Heart right ventricle (tissue), 16 donors: ENCODE measurements at regions of chr15 and their contacts with region 1.

Region 1: GRCh38 chr15:23516866-23517265 is 48.6 kb upstream of the MKRN3 start:
- DNase-seq: no peak
- ATAC-seq: no peak
- H3K4me3 ChIP-seq: no peak overlapping the region
- H3K27ac ChIP-seq: no peak overlapping the region
- H3K4me1 ChIP-seq: no peaks in the 10 kb centered on the region
- H3K27me3 ChIP-seq: no peaks in the 10 kb centered on the region
- CTCF ChIP-seq: no peak

Region 2: GRCh38 chr15:23497710-23498111 is 19.2 kb before region 1 on chr15:
- intact Hi-C with region 1: loop called in 1 of 10 experiments (anchors 2 kb)
- DNase-seq: no peak
- ATAC-seq: no peak
- H3K4me3 ChIP-seq: no peak overlapping the region
- H3K27ac ChIP-seq: no peak overlapping the region
- H3K4me1 ChIP-seq: no peaks in the 10 kb centered on the region
- H3K27me3 ChIP-seq: peaks cover 0 to under 1% (median 0%) of the 10 kb centered on the region in 7 donors
- CTCF ChIP-seq: peak in 5 of 9 donors; percentile 26 to 44 (median 36)

Region 3: DNA sequence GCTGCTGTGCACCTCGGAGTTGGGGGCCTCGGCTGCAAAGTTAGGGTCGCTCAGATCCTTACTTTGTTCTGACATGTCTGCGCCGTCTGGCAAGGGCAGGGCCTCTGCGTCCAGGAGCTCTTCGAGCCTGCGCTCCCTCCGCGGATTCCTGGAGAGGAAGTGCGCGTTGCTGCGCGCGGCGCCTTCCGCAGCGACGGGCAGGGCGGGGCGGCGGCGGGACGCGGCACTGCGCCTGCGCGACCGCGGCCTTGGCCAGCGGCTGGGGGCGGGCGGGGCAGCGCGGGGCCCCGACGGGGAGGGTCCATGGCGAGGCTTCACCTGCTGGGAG is 170.2 kb after region 1 on chr15 and contains the start of gene NDN:
- intact Hi-C with region 1: no loop called
- DNase-seq: peak; percentile 25 to 64
- ATAC-seq: peak; percentile 72 to 84 (median 78)
- H3K4me3 ChIP-seq: peak within 1 kb of the TSS; percentile 21 to 62 (median 53)
- H3K27ac ChIP-seq: peak within 1 kb of the TSS in 6 of 10 donors; percentile 27 to 58 (median 46)
- H3K4me1 ChIP-seq: peaks cover 0 to 10% (median 0%) of the 10 kb centered on the region in 9 donors
- H3K27me3 ChIP-seq: no peaks in the 10 kb centered on the region
- CTCF ChIP-seq: no peak
- total RNA-seq, gene NDN: 33.2 to 54.6 (median 41.8) TPM